Tibial artery (tissue), 4 donors: ENCODE measurements at regions of chr19 and their contacts with region 1.

Region 1: GRCh38 chr19:3323026-3323425 is 43.4 kb upstream of the NFIC start:
- DNase-seq: no peak
- H3K4me3 ChIP-seq: no peak overlapping the region
- H3K27ac ChIP-seq: no peak overlapping the region
- H3K4me1 ChIP-seq: no peaks in the 10 kb centered on the region
- H3K27me3 ChIP-seq: peaks cover 0 to 37% of the 10 kb centered on the region in 2 donors
- CTCF ChIP-seq: no peak

Region 2: GRCh38 chr19:3274942-3275582 is 48.0 kb before region 1 on chr19:
- intact Hi-C with region 1: no loop called
- DNase-seq: no peak
- H3K4me3 ChIP-seq: peak overlapping the region in 1 of 2 donors; percentile 40
- H3K27ac ChIP-seq: no peak overlapping the region
- H3K4me1 ChIP-seq: peaks cover 0 to 15% (median 9%) of the 10 kb centered on the region in 4 donors
- H3K27me3 ChIP-seq: peaks cover 4 to 92% of the 10 kb centered on the region in 2 donors
- CTCF ChIP-seq: no peak

Region 3: DNA sequence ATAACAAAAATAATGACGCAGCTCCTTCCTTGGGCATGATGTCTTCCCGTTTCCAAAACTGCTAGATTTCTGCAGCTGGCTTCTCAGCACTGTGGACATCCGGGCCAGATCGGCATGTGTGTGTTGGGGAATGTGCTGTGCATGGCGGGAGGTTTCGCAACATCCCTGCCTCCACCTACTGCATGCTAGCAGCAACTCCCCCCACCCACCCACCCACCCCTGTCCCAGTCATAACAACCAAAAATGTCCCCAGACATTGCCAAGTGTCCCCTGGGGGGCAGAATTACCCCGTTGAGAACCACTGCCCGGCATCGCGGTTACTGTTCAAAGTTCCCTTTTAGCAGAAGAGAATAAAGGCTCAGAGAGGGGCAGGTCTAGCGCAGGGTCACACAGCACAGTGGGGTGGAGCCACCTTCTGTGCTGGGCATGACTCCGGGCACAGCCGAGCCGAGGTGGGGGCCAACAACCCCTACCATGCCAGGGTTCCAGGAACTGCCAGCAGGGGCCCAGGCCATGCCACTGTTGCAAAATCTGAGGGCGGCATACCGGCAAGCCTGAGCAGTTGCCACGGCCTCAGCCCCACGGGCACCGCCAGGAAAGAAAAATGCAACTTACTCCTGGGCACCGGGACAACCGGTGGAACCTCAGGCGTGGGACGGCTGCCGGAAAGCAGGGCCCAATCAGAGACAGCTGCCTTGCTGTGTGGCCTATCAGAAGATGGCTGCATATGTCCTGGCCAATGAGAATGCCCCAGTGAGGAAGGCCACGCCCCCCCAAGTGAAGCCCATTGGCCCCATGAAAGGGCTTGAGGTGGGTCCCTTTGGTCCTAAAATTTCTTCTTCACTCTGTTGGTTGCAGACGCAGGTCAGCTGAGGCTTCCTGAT is 20.8 kb after region 1 on chr19:
- intact Hi-C with region 1: no loop called
- DNase-seq: peak; percentile 97
- H3K4me3 ChIP-seq: peak overlapping the region; percentile 24 to 37
- H3K27ac ChIP-seq: peak overlapping the region; percentile 75 to 87
- H3K4me1 ChIP-seq: peaks cover 9 to 64% (median 53%) of the 10 kb centered on the region in 4 donors
- H3K27me3 ChIP-seq: no peaks in the 10 kb centered on the region
- CTCF ChIP-seq: peak in 1 of 2 experiments; percentile 49

Region 4: DNA sequence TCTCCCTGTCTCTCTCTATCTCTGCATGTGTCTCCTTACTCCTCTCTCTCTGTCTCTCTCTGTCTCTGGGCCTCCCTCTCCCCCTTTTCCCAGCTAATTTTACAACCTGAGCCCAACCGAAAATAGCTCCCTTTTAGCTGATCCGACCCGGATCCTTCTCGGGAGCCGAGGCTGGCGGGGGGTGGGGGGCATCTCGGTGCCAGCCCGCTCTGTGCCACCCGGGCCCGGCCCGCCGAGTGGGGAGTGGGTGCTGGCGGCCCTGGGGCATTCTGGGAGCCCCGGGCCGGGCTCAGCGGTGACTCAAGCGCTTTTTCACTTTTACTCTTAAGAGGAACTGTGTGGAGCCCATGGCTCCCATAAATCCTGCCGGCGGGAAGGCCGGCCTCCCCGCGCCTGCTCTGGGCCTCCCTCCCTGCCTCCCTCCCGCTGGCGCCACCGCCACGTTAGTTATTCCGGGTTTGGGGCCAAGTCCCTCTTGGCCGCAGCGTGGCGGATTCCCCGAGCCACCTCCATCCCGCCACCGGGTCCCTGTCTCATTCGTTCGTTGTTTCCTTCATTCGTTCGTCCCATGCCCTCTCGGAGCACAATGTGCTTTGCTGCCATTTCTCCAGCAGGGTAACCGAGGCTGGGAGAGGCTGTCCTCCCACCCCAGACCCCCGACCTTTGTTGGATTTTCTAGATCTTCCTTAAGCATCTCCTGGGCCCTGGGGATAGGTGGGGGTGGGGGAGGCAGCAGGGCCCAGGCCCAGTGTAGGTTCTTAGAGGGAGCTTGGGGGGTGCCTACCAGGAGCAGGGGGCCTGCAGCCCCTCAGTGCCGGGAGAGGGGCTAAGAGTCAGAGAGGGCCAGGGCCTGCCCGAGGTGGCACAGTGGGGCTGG is 46.5 kb after region 1 on chr19:
- intact Hi-C with region 1: no loop called
- DNase-seq: peak; percentile 73 to 92
- H3K4me3 ChIP-seq: peak overlapping the region; percentile 98
- H3K27ac ChIP-seq: peak overlapping the region; percentile 99 to 100
- H3K4me1 ChIP-seq: peaks cover 3 to 79% (median 64%) of the 10 kb centered on the region in 4 donors
- H3K27me3 ChIP-seq: no peaks in the 10 kb centered on the region
- CTCF ChIP-seq: peak in 1 of 2 experiments; percentile 25

Region 5: GRCh38 chr19:3429581-3430080 is 106.6 kb after region 1 on chr19:
- intact Hi-C with region 1: loop called (anchors 5 kb)
- DNase-seq: peak; percentile 98 to 99
- H3K4me3 ChIP-seq: no peak overlapping the region
- H3K27ac ChIP-seq: peak overlapping the region; percentile 88 to 93
- H3K4me1 ChIP-seq: peaks cover 5 to 82% (median 62%) of the 10 kb centered on the region in 4 donors
- H3K27me3 ChIP-seq: no peaks in the 10 kb centered on the region
- CTCF ChIP-seq: peak; percentile 99 to 100

Region 6: DNA sequence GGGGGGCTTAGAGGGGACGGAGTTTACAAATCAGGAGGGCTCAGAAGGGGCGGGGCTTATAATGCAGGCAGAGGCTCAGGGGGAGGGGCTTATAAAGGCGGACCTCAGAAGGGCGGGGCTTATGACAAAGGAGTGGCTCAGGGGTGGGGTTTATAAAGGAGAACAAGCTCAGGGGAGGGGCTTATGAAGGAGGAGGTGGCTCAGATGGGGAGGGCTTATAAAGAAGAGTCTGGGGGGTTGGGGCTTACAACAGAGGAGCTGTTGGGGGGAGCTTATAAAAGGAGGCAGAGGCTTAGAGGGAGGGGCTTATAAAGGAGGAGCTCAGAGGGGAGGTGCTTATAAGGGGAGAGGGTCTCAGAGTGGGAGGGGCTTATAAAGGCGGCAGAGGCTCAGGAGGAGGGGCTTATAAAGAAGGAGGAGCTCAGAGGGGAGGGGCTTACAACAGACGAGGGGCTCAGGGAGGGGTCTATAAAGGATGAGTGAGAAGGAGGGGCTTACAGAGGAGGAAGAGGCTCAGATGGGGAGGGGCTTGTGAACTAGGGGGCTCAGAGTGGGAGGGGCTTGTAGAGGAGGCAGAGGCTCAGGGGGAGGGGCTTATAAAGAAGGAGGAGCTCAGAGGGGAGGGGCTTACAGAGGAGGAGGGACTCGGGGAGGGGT is 156.3 kb after region 1 on chr19:
- intact Hi-C with region 1: loop called (anchors 2 kb)
- DNase-seq: peak in 1 of 2 donors; percentile 19
- H3K4me3 ChIP-seq: no peak overlapping the region
- H3K27ac ChIP-seq: no peak overlapping the region
- H3K4me1 ChIP-seq: peaks cover 0 to 9% (median 3%) of the 10 kb centered on the region in 4 donors
- H3K27me3 ChIP-seq: peaks cover 3 to 56% of the 10 kb centered on the region in 2 donors
- CTCF ChIP-seq: no peak